Vagina (tissue), 2 donors: ENCODE measurements at regions of chr19 and their contacts with region 1.

Region 1: DNA sequence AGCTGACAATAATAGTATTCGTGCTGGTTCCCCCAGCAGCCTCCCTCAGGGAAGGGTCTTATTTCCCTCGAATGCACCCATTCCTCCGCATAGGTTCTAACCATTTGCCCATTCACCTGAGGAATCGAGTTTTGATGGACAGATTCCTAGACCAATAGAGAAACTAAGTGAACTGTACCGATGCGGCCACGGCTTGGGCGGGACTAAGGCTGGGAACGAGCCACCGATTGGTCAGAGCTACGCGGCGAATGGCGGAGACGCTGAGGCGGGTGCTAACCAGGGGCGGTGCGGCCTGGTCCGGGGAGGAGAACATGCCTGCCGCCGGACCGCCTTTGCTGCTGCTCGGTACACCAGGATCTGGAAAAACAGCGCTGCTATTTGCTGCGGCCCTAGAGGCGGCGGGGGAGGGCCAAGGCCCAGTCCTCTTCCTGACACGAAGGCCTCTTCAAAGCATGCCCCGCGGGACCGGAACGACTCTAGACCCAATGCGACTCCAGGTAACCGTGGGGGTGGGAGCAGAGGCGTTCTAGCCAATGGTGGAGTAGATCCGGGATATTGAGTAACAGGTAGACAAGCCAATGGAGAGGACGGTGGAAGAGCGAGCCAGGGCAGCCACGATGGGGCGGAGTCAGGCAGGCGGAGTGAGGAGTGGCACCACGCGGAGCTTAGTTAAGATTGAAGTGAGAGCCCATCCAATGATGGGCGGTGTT is at the start of gene SWSAP1:
- DNase-seq: peak; percentile 99 to 100
- H3K4me3 ChIP-seq: peak within 1 kb of the TSS; percentile 60 to 64
- H3K27ac ChIP-seq: peak within 1 kb of the TSS; percentile 86
- H3K4me1 ChIP-seq: peaks cover 51% of the 10 kb centered on the region
- H3K27me3 ChIP-seq: no peaks in the 10 kb centered on the region
- CTCF ChIP-seq: no peak
- POLR2A ChIP-seq: peak in 1 of 2 donors; percentile 25
- total RNA-seq, gene SWSAP1: 1.5 TPM

Region 2: DNA sequence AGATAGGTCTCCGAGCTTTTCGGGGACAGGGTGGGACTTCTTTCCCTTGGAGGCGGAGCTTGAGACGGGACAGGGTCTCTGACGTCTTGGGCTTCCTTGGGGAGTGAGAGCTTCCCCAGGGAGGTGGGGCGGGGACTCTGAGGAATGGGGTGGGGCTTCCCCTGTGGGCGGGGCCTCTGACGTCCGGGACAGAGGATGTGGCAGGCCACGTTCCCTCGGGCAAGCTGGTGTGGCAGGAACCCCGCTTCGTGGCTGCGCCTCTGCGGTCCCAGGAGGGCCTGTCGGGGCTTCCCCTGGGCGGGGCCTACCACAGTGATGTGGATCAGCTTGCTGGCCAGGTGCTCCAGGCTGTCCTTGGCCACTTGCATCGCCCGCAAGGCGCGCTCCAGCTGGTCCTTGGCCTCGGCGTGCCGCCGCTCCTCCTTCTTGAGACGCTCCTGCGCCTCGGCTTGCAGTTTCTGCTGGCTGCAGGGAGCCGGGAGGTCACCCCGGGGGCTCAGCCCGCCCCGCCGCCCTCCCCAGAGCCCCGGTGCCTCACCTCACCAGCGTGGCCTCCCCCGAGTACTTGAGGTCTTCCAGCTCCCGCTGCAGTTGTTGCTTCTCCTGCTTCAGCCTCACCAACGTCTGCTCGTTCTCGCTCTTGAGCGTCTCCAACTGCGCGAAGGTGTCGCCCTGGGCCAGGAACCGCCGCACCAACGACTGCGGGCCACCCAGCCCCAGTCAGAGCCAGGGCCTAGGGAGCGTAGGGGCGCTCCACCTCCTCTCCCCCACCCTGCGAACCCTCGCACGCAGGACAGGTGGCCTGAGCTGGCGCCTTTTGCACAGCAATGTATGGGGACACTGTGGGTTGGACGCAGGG is 47.8 kb after region 1 on chr19:
- intact Hi-C with region 1: no loop called
- DNase-seq: peak in 1 of 2 donors; percentile 94
- H3K4me3 ChIP-seq: peak overlapping the region; percentile 33 to 47
- H3K27ac ChIP-seq: peak overlapping the region; percentile 68
- H3K4me1 ChIP-seq: peaks cover 54% of the 10 kb centered on the region
- H3K27me3 ChIP-seq: no peaks in the 10 kb centered on the region
- CTCF ChIP-seq: no peak
- POLR2A ChIP-seq: no peak

Region 3: DNA sequence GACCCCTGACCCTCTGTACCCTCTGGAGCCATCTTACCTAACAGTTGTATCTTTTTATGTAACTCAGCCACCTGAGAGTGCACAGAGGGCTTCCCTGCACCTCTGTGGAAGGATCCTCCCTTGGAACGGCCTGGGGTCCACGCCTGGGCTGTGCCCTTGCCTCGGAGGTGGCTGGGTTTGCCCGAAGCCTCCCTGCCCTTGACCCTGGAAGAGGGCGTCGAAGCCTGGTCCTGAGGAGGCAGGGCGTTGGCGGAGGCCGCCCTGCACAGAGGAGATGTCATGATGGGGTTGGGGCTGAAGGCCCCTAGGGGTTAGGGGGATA is 60.1 kb after region 1 on chr19:
- intact Hi-C with region 1: loop called (anchors 5 kb)
- DNase-seq: no peak
- H3K4me3 ChIP-seq: peak overlapping the region; percentile 74 to 90
- H3K27ac ChIP-seq: peak overlapping the region; percentile 83
- H3K4me1 ChIP-seq: peaks cover 21% of the 10 kb centered on the region
- H3K27me3 ChIP-seq: no peaks in the 10 kb centered on the region
- CTCF ChIP-seq: no peak
- POLR2A ChIP-seq: no peak